ENCODE measurements at regions of chr22 and their contacts with region 1.

Region 1: GRCh38 chr22:17830043-17830961 is 56.0 kb upstream of the BID start:
- DNase-seq: peak; percentile 91 to 93
- H3K4me3 ChIP-seq: no peak overlapping the region
- H3K27ac ChIP-seq: peak overlapping the region; percentile 71 to 81
- H3K4me1 ChIP-seq: peaks cover 4 to 35% (median 22%) of the 10 kb centered on the region in 4 donors
- H3K27me3 ChIP-seq: no peaks in the 10 kb centered on the region
- CTCF ChIP-seq: peak; percentile 99 to 100

Region 2: GRCh38 chr22:17876306-17876831 is 46.1 kb after region 1 on chr22:
- intact Hi-C with region 1: no loop called
- DNase-seq: no peak
- H3K4me3 ChIP-seq: no peak overlapping the region
- H3K27ac ChIP-seq: no peak overlapping the region
- H3K4me1 ChIP-seq: no peaks in the 10 kb centered on the region
- H3K27me3 ChIP-seq: no peaks in the 10 kb centered on the region
- CTCF ChIP-seq: no peak

Region 3: GRCh38 chr22:17891481-17892167 is 61.3 kb after region 1 on chr22:
- intact Hi-C with region 1: loop called (anchors 2 kb)
- DNase-seq: peak in 1 of 2 donors; percentile 71
- H3K4me3 ChIP-seq: no peak overlapping the region
- H3K27ac ChIP-seq: peak overlapping the region; percentile 31 to 62
- H3K4me1 ChIP-seq: peaks cover 0 to 26% (median 11%) of the 10 kb centered on the region in 4 donors
- H3K27me3 ChIP-seq: no peaks in the 10 kb centered on the region
- CTCF ChIP-seq: peak; percentile 30 to 53

Region 4: GRCh38 chr22:18001040-18001893 is 171.0 kb after region 1 on chr22:
- intact Hi-C with region 1: loop called (anchors 10 kb)
- DNase-seq: peak; percentile 88 to 92
- H3K4me3 ChIP-seq: peak overlapping the region; percentile 75 to 99
- H3K27ac ChIP-seq: peak overlapping the region; percentile 81 to 92
- H3K4me1 ChIP-seq: peaks cover 0 to 53% (median 13%) of the 10 kb centered on the region in 4 donors
- H3K27me3 ChIP-seq: no peaks in the 10 kb centered on the region
- CTCF ChIP-seq: peak; percentile 51 to 53